ENCODE measurements at regions of chr1 and their contacts with region 1.

Region 1: DNA sequence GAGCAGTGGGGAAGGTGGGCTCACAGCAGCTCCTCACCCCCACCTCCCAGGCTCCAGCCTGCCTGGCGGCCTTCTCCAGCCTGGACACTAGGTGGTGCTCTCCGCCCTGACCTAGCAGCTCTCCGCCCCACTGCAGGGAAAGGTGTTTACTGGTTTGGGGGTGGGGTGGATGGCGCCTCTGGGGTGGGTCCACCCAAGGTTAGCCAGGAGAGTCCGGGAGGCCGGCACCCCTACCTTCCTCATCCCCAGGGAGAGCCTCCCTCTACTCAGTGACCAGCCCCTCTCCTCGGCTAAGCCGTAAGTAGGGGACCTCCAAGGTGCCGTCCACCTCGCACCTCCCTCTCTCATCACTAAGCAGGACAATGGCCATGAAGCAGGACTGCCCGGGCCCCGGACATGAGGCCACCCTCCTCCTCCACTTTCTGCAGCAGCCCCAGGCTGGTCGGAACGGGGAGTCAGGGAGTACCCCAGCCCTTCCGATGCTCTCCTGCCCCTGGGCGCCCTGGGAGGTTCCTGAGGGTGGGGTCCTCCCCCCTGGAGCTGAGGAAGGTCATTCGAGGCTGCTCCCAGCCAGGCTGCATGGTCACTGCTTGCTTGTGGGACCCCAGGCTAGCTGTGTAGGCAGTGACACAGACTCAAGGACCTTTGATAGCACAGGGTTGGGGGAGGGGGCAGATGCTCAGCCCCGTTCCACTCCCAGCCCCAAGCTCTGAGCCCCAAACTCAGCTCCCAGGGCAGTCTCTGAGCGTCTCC is 101.4 kb upstream of the VAMP3 start:
- DNase-seq: peak; percentile 68 to 88 (median 78)
- H3K4me3 ChIP-seq: no peak overlapping the region
- H3K27ac ChIP-seq: no peak overlapping the region
- H3K4me1 ChIP-seq: peaks cover 0 to 8% (median 5%) of the 10 kb centered on the region in 3 donors
- H3K27me3 ChIP-seq: no peaks in the 10 kb centered on the region
- CTCF ChIP-seq: peak; percentile 83

Region 2: DNA sequence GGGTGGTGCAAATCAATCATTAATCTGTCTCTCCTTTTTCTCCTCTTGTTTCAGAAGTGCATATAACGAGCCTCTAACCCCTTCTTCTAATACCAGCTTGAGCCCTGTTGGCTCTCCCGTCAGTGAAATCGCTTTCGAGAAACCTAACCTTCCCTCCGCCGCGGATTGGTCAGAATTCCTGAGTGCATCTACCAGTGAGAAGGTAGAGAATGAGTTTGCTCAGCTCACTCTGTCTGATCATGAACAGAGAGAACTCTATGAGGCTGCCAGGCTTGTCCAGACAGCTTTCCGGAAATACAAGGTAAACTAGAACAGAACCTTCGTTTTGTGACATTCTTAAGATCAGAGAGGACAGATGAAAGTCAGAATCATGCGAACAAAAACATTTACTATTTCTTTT is 76.1 kb after region 1 on chr1:
- intact Hi-C with region 1: loop called (anchors 5 kb)
- DNase-seq: peak in 1 of 5 donors; percentile 75
- H3K4me3 ChIP-seq: peak overlapping the region in 2 of 3 donors; percentile 3 to 15
- H3K27ac ChIP-seq: peak overlapping the region in 1 of 2 donors; percentile 33
- H3K4me1 ChIP-seq: no peaks in the 10 kb centered on the region
- H3K27me3 ChIP-seq: no peaks in the 10 kb centered on the region
- CTCF ChIP-seq: no peak

Measured in kidney (tissue), 22 donors.